ENCODE measurements at regions of chr1 and their contacts with region 1.

Region 1: DNA sequence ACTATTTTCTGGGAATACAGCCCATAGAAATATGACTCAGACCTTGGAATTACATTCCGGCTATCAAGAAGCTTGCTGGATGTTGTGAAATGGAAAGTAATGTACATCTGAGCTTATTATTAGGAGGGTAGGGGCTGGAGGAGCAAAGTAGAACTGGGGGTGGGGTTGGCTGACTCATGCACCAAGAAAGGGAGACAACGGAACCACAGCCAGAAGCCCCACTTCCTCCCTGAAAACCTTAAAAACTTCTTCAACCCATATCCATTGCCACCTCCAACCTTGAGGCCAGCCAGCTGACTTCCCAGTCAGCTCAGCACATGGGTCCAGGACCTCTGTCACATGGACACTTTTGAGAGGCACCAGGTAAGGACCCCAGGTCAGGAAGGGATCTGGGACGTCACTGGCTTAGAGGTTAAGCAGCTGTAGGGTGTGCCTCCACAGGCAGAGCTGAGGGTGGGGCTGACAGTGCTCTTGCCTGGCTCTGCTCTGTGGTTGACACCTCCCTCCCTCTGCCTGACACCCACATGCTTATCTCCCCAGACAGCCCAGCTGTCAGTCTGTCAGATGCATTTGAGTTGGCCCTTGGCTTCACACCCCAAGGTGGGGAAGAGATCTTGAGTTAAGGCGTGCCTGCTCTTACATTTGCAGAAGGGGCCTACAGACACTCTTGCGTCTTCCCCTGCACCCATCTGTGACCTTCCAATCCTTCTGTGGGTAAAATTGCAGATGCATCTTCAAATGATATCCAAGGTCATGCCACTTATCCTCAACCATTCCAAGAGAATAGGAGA is 5.7 kb upstream of the ZNF683 start:
- DNase-seq: peak; percentile 81
- ATAC-seq: peak; percentile 97
- H3K4me3 Mint-ChIP-seq: peak overlapping the region; percentile 62
- H3K27ac Mint-ChIP-seq: peak overlapping the region; percentile 87
- H3K4me1 Mint-ChIP-seq: peaks cover 61% of the 10 kb centered on the region
- H3K27me3 Mint-ChIP-seq: no peaks in the 10 kb centered on the region

Region 2: DNA sequence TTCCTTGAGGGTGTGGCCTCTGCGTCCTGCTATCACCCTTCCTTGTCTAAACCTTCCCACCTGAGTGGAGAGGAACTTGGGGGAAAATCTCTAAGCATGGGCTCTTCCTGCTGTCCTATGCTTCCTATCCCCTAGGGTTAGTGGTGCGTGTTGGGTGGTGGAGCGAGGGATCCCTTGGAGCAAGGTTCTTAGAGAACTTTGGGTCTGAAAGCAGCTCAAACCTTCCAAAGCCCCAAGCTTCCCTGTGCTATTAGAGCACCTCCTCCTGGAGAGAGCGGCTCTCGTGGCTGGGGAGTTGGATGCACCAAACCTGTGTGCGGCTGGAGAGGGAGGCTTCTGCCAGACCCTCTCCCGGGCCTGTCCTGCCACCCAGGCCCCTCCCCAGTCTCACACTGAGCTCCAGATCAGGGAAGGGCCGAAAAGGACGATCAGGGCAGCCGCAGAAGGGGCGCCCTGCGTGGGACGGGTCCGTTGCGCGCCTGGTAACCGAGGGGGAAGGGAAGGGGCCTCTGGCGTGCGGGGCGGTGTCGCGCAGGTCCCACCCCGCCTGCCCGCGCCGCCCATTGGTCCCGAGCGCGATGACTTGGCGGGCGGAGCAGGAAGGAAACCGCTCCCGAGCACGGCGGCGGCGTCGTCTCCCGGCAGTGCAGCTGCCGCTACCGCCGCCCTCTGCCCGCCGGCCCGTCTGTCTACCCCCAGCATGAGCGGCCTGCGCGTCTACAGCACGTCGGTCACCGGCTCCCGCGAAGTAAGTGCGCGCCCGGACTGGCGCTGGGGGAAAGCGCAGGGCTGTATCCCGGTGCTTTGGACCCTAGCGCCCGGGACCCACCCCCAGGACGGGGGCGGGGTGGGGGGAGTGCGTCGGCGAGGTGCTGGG is 98.6 kb before region 1 on chr1 and contains the start of gene SH3BGRL3:
- POLR2A ChIA-PET with region 1: interaction called, 13 read pairs
- DNase-seq: peak; percentile 88
- ATAC-seq: peak; percentile 55
- H3K4me3 Mint-ChIP-seq: peak within 1 kb of the TSS; percentile 98
- H3K27ac Mint-ChIP-seq: peak within 1 kb of the TSS; percentile 93
- H3K4me1 Mint-ChIP-seq: peaks cover 70% of the 10 kb centered on the region
- H3K27me3 Mint-ChIP-seq: no peaks in the 10 kb centered on the region
- total RNA-seq, gene SH3BGRL3: 531 to 542 TPM

Region 3: GRCh38 chr1:26284597-26285360 is 93.5 kb before region 1 on chr1:
- POLR2A ChIA-PET with region 1: interaction called, 13 read pairs
- DNase-seq: peak; percentile 85
- ATAC-seq: peak; percentile 63
- H3K4me3 Mint-ChIP-seq: peak overlapping the region; percentile 89
- H3K27ac Mint-ChIP-seq: peak overlapping the region; percentile 99
- H3K4me1 Mint-ChIP-seq: peaks cover 71% of the 10 kb centered on the region
- H3K27me3 Mint-ChIP-seq: no peaks in the 10 kb centered on the region

Region 4: GRCh38 chr1:26358411-26359384 is 19.6 kb before region 1 on chr1:
- POLR2A ChIA-PET with region 1: interaction called, 12 read pairs
- DNase-seq: peak; percentile 72
- ATAC-seq: peak; percentile 86
- H3K4me3 Mint-ChIP-seq: peak overlapping the region; percentile 63
- H3K27ac Mint-ChIP-seq: peak overlapping the region; percentile 76
- H3K4me1 Mint-ChIP-seq: peaks cover 46% of the 10 kb centered on the region
- H3K27me3 Mint-ChIP-seq: peaks cover 6% of the 10 kb centered on the region

Region 5: DNA sequence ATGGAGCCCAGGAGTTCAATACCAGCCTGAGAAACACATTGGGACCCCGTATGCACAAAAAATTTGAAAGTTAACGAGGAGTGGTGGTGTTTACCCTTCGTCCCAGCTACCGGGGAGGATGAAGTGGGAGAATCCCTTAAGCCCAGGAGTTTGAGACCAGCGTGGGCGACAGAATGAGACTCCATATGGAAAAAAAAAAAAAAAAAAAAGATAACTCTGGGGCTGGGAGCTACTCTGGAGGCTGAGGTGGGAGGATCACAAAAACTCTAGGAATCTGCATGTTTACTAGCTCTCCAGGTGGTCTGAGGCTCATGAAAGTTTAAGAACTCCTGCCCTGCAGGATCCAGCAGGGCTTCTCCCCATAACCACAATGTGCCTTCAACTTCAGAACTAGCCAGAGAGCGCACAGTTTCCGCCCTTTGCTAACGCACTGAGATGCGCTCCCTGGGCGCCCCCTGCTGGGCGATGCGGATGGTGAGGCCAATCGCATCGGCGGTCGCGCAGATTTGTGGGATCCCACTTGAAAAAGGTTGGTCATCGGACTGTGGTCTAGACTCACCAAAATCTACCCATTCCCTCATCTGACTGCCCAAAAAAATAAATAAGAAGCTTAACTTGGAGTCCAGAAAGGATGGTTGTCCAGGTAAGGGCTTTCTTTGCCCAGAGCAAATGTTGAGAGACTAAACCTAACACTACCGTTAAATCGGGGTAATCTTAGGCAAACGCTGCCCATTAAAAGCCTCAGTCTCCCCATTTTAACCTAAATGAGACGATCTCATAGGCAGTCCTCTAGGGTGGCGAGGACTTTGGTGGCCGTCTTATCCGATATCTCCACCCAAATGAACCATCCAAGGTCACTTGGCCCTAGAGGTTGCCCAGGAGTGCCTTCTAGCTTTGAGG is 14.5 kb before region 1 on chr1:
- POLR2A ChIA-PET with region 1: interaction called, 12 read pairs
- DNase-seq: peak; percentile 92
- ATAC-seq: peak; percentile 80
- H3K4me3 Mint-ChIP-seq: peak overlapping the region; percentile 67
- H3K27ac Mint-ChIP-seq: no peak overlapping the region
- H3K4me1 Mint-ChIP-seq: peaks cover 48% of the 10 kb centered on the region
- H3K27me3 Mint-ChIP-seq: peaks cover 15% of the 10 kb centered on the region

Region 6: DNA sequence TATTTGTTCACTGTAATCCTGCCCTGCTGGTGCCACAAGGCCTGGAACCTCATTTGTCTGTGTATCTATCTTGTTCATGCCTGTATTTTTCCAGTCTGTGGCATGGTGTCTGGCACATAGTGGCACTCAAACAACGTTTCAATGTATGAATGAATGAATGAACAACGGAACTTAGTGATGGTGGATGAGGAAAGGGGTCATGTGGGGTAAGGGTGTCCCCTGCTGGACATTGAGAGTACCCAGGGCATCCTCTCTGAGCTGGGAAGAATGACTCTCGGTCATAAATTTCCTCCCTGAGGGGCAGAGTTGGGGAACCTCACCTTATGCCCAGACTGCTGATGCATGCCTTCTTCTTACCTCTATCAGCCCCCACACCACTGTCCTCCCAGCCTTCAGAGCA is 13.2 kb after region 1 on chr1:
- POLR2A ChIA-PET with region 1: interaction called, 36 read pairs
- DNase-seq: no peak
- ATAC-seq: peak; percentile 66
- H3K4me3 Mint-ChIP-seq: peak overlapping the region; percentile 60
- H3K27ac Mint-ChIP-seq: peak overlapping the region; percentile 82
- H3K4me1 Mint-ChIP-seq: peaks cover 55% of the 10 kb centered on the region
- H3K27me3 Mint-ChIP-seq: peaks cover 4% of the 10 kb centered on the region

Region 7: DNA sequence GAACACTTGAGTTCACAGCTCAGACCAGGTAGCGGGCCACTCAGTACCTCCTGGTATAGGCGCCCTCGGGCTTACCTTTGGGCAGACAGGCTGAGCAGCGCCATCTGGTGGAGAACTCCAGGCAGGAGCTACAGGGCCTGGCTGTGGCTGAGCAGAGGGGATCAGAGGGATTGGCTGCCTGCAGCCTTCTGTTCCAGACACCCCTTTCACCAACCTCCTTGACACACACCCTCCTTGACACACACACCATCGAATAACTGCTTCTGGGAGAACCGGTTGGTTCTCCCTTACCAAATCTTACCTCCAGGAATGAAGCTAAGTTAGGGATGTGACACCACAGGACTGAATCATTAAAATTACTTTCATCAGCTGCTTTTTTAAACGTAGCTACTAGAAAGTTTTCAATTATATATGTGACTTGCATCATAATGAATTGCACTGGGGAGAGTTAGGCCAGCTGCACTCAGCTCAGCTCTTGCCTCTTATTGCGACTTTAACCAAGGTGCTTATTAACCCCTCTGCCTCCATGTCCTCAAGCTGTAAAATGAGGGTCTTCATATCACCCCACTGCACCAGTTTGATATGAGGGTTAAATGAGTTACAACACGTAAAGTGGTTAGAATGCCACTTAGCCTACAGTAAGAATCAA is 39.0 kb after region 1 on chr1:
- POLR2A ChIA-PET with region 1: no interaction called
- DNase-seq: peak; percentile 84
- ATAC-seq: peak; percentile 100
- H3K4me3 Mint-ChIP-seq: no peak overlapping the region
- H3K27ac Mint-ChIP-seq: no peak overlapping the region
- H3K4me1 Mint-ChIP-seq: peaks cover 9% of the 10 kb centered on the region
- H3K27me3 Mint-ChIP-seq: peaks cover 58% of the 10 kb centered on the region

Region 8: GRCh38 chr1:26541816-26542711 is 163.8 kb after region 1 on chr1:
- POLR2A ChIA-PET with region 1: no interaction called
- DNase-seq: peak; percentile 84
- ATAC-seq: peak; percentile 78
- H3K4me3 Mint-ChIP-seq: peak overlapping the region; percentile 77
- H3K27ac Mint-ChIP-seq: peak overlapping the region; percentile 93
- H3K4me1 Mint-ChIP-seq: peaks cover 71% of the 10 kb centered on the region
- H3K27me3 Mint-ChIP-seq: no peaks in the 10 kb centered on the region